HepG2 (cell line): ENCODE measurements at regions of chr7 and their contacts with region 1.

Region 1: DNA sequence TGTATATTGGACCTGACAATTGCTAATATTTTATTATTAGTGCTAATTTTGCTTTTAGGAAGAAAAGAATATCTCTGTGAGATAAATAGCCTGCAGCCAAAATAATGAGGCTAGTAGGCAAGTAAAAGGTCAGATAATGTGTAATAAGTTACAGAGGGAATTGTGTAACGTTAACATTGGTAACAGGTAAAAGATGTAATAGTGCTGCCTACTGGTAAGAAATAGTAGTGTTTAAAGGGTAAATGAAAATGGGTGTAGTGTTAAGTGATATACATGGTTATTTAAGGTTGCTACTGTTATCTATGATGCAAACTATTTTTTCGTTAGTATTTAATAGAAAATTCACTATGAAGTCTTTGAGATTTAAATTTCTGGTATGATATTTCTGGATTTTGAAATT is 9.2 kb upstream of the FOXP2 start:
- DNase-seq: peak; percentile 30
- ATAC-seq: peak; percentile 86
- H3K4me3 ChIP-seq: no peak overlapping the region
- H3K27ac ChIP-seq: no peak overlapping the region
- H3K4me1 ChIP-seq: no peaks in the 10 kb centered on the region
- H3K27me3 ChIP-seq: no peaks in the 10 kb centered on the region
- CTCF ChIP-seq: peak; percentile 53
- EP300 ChIP-seq: no peak
- POLR2A ChIP-seq: no peak
- RAD21 ChIP-seq: no peak

Region 2: DNA sequence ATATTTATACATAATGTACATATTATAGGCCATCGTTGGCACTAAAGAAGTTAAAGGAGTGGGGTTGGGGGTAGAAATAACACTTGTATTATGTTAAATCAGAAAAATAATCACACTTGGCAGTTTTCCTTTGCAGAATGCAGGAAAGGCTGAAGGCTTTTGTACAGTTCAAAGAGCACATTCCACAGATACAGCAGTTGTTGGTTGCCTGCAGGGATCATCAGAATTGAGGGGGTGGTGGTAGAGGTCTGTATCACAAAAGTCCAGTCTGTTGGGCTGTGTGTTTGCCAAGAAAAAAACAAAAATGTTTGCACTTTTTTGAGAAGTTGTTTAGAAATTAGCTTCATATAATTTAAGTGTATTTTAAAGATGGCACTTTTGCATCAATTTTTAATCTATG is 222.6 kb before region 1 on chr7:
- CTCF ChIA-PET with region 1: no interaction called
- POLR2A ChIA-PET with region 1: no interaction called
- in situ Hi-C with region 1: no loop called
- intact Hi-C with region 1: no loop called
- DNase-seq: peak; percentile 6
- ATAC-seq: peak; percentile 67; the same call in 2 of the 3 replicates
- H3K4me3 ChIP-seq: no peak overlapping the region
- H3K27ac ChIP-seq: no peak overlapping the region
- H3K4me1 ChIP-seq: no peaks in the 10 kb centered on the region
- H3K27me3 ChIP-seq: no peaks in the 10 kb centered on the region; a peak in 1 of 5 replicates
- CTCF ChIP-seq: no peak
- EP300 ChIP-seq: no peak
- POLR2A ChIP-seq: no peak
- RAD21 ChIP-seq: no peak

Region 3: GRCh38 chr7:114229246-114229645 is 176.2 kb before region 1 on chr7:
- CTCF ChIA-PET with region 1: no interaction called
- POLR2A ChIA-PET with region 1: no interaction called
- in situ Hi-C with region 1: no loop called
- intact Hi-C with region 1: no loop called
- DNase-seq: no peak
- ATAC-seq: no peak
- H3K4me3 ChIP-seq: no peak overlapping the region
- H3K27ac ChIP-seq: no peak overlapping the region
- H3K4me1 ChIP-seq: no peaks in the 10 kb centered on the region
- H3K27me3 ChIP-seq: no peaks in the 10 kb centered on the region
- CTCF ChIP-seq: no peak
- EP300 ChIP-seq: no peak
- POLR2A ChIP-seq: no peak
- RAD21 ChIP-seq: no peak

Region 4: GRCh38 chr7:114375907-114376306 is 29.5 kb before region 1 on chr7:
- CTCF ChIA-PET with region 1: no interaction called
- POLR2A ChIA-PET with region 1: no interaction called
- in situ Hi-C with region 1: no loop called
- intact Hi-C with region 1: no loop called
- DNase-seq: no peak
- ATAC-seq: no peak
- H3K4me3 ChIP-seq: no peak overlapping the region
- H3K27ac ChIP-seq: no peak overlapping the region
- H3K4me1 ChIP-seq: no peaks in the 10 kb centered on the region
- H3K27me3 ChIP-seq: no peaks in the 10 kb centered on the region
- CTCF ChIP-seq: no peak
- EP300 ChIP-seq: no peak
- POLR2A ChIP-seq: no peak
- RAD21 ChIP-seq: no peak

Region 5: DNA sequence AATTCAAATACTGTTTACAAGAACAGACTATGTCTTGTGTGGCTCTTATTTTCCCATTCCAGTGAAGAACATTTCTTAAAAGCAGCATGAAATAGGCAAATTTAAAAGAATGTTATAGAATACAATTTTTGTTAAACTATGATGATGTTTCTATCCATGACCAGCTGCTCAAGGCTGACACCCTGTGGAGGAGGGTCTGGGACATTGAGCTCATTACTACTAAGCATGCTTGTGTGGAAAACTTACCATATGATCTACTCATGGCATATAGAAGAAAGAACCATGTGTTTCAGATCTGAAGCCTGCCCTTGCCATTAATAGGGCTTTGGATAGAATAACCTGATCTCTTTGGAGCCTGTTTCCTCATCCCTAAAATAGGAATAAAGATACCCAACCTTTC is 134.1 kb after region 1 on chr7:
- CTCF ChIA-PET with region 1: no interaction called
- POLR2A ChIA-PET with region 1: no interaction called
- in situ Hi-C with region 1: no loop called
- intact Hi-C with region 1: loop called (anchors 1 kb)
- DNase-seq: peak; percentile 12
- ATAC-seq: peak; percentile 60
- H3K4me3 ChIP-seq: no peak overlapping the region
- H3K27ac ChIP-seq: no peak overlapping the region
- H3K4me1 ChIP-seq: no peaks in the 10 kb centered on the region
- H3K27me3 ChIP-seq: no peaks in the 10 kb centered on the region
- CTCF ChIP-seq: peak; percentile 41
- EP300 ChIP-seq: no peak
- POLR2A ChIP-seq: no peak
- RAD21 ChIP-seq: no peak

Region 6: GRCh38 chr7:115289971-115290370 is 884.5 kb after region 1 on chr7:
- CTCF ChIA-PET with region 1: no interaction called
- POLR2A ChIA-PET with region 1: no interaction called
- in situ Hi-C with region 1: no loop called
- intact Hi-C with region 1: no loop called
- DNase-seq: no peak
- ATAC-seq: no peak
- H3K4me3 ChIP-seq: no peak overlapping the region
- H3K27ac ChIP-seq: no peak overlapping the region
- H3K4me1 ChIP-seq: no peaks in the 10 kb centered on the region
- H3K27me3 ChIP-seq: no peaks in the 10 kb centered on the region
- CTCF ChIP-seq: no peak
- EP300 ChIP-seq: no peak
- POLR2A ChIP-seq: no peak
- RAD21 ChIP-seq: no peak